Caco-2 (cell line): ENCODE measurements at regions of chr7 and their contacts with region 1.

Region 1: DNA sequence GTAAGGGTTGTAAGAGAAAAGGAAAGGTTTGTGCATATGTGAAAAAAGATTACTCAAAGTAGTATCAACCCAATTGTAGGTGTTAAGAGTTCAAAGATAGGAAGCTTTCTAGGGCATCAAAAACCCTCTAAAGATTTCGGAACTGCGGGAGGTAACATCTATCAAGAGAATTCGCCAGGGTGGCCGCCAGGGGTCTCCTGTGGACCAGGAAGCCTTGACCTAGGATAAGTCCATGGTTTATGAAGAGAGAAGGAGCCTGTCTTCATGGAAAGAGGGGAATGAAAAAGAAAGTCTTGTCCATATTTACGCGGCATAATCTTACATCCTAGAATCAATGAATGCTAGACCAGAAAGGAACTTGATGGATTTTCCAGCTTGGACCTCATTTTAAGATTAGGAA is 140.7 kb upstream of the CALCR start:
- DNase-seq: peak; percentile 58 to 71
- H3K4me3 ChIP-seq: no peak overlapping the region
- H3K4me3 Mint-ChIP-seq: no peak overlapping the region
- H3K27ac Mint-ChIP-seq: no peak overlapping the region
- H3K4me1 ChIP-seq: peaks cover 12% of the 10 kb centered on the region
- H3K4me1 Mint-ChIP-seq: no peaks in the 10 kb centered on the region
- H3K27me3 ChIP-seq: no peaks in the 10 kb centered on the region
- H3K27me3 Mint-ChIP-seq: no peaks in the 10 kb centered on the region
- CTCF ChIP-seq: peak; percentile 70 to 82

Region 2: GRCh38 chr7:93622036-93623033 is 92.9 kb before region 1 on chr7:
- CTCF ChIA-PET with region 1: no interaction called
- POLR2A ChIA-PET with region 1: no interaction called
- intact Hi-C with region 1: loop called (anchors 5 kb)
- DNase-seq: peak; percentile 40 to 42
- H3K4me3 ChIP-seq: no peak overlapping the region
- H3K4me3 Mint-ChIP-seq: no peak overlapping the region
- H3K27ac Mint-ChIP-seq: no peak overlapping the region
- H3K4me1 ChIP-seq: no peaks in the 10 kb centered on the region
- H3K4me1 Mint-ChIP-seq: peaks cover 6% of the 10 kb centered on the region
- H3K27me3 ChIP-seq: no peaks in the 10 kb centered on the region
- H3K27me3 Mint-ChIP-seq: no peaks in the 10 kb centered on the region
- CTCF ChIP-seq: peak; percentile 54 to 71

Region 3: DNA sequence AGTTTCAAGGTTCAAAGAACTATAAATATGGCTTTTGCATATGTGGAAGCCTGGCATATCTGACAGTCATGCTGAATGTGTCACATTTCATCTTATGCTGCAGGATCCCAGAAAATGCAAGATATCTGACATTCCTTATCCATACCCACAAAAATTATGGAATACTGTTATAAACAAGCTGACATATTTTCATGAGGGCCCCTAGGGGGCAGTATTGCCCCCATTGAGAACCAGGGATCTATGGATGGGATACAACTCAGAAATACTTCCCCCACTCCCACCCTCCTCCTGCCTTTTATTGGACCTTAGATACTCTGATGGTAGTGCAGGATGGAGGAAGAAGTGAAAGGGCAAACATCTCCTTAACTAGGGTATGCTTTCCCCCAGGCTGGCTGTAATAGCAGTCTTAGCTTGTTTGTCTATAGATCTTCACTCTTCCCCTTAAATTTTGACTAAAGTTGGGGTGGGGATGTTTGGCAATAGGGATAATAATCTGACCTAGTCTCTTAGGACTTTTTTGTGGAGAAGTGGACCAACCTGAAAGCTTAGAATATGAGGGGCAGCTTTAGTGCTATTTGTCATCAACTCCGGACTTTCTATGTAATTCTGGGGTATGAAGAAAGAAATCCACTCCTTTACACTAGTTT is 187.7 kb after region 1 on chr7:
- CTCF ChIA-PET with region 1: no interaction called
- POLR2A ChIA-PET with region 1: no interaction called
- intact Hi-C with region 1: loop called (anchors 10 kb)
- DNase-seq: no peak
- H3K4me3 ChIP-seq: no peak overlapping the region
- H3K4me3 Mint-ChIP-seq: no peak overlapping the region
- H3K27ac Mint-ChIP-seq: no peak overlapping the region
- H3K4me1 ChIP-seq: peaks cover under 1% of the 10 kb centered on the region; the same call in 1 of the 2 replicates
- H3K4me1 Mint-ChIP-seq: peaks cover 1% of the 10 kb centered on the region
- H3K27me3 ChIP-seq: no peaks in the 10 kb centered on the region; the same call in 1 of the 2 replicates
- H3K27me3 Mint-ChIP-seq: peaks cover 3% of the 10 kb centered on the region
- CTCF ChIP-seq: peak; percentile 56 to 60